BJ (cell line): ENCODE measurements at regions of chr20 and their contacts with region 1.

Region 1: DNA sequence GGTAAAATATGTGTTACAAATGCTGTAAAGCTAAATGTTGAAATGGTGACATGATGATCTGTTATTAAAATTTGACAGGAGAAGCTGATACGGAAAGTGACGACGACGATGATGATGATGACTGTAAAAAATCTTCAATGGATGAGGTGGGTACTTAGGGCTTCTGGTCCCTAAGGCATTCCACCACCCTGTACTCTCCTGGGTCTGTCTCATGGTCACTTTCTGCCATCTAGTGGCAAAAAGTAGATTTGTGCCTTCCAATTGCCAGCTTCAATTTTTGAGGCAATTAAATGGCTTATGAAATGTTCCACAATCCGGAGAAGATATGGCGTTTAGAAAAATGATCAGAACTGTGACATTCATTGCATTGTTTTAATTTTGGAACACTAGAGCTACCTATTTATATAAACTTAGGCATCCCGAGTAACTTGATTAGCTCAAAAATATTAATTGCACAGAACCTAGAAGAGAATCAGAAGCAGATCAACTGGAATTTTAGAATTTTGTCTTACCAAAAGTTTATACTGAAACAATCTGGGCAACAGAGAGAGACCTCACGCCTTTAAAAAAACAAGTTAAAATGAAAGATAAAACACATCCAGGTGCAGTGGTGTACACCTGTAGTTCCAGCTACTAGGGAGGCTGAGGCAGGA is 346.5 kb upstream of the PLCB4 start:
- DNase-seq: no peak
- H3K4me3 ChIP-seq: no peak overlapping the region
- H3K27me3 ChIP-seq: no peaks in the 10 kb centered on the region
- CTCF ChIP-seq: peak; percentile 76

Region 2: GRCh38 chr20:7935027-7935551 is 787.3 kb before region 1 on chr20:
- CTCF ChIA-PET with region 1: interaction called, 143 read pairs
- POLR2A ChIA-PET with region 1: no interaction called
- DNase-seq: no peak
- H3K4me3 ChIP-seq: no peak overlapping the region
- H3K27me3 ChIP-seq: no peaks in the 10 kb centered on the region; the same call in none of the 2 replicates
- CTCF ChIP-seq: no peak

Region 3: DNA sequence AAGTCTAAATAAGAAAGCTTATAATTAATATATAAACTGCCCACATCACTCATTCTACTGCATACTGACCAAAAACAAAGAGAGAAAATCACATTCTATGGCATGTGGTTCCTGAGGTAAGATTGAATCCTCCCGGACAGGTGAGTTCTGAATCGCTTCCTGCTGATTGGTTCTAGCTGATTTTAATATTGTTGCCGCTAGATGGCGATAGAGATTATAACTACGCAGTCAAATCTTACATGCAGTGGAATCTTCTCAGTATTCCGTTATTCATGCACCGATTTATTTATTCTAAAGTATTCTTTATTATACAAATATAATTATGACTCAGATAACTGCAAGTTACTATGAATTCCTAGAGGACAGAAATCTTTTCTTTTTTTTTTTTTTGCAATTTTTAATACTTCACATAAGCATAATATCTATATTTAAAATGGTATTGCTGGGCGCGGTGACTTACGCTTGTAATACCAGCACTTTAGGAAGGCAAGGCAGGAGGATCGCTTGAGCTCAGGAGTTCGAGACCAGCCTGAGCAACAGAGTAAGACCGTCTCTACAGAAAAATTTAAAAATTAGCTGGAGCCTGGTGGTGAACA is 678.6 kb before region 1 on chr20:
- CTCF ChIA-PET with region 1: interaction called, 183 read pairs
- POLR2A ChIA-PET with region 1: no interaction called
- DNase-seq: no peak
- H3K4me3 ChIP-seq: no peak overlapping the region
- H3K27me3 ChIP-seq: peaks cover 1% of the 10 kb centered on the region
- CTCF ChIP-seq: peak; percentile 61

Region 4: DNA sequence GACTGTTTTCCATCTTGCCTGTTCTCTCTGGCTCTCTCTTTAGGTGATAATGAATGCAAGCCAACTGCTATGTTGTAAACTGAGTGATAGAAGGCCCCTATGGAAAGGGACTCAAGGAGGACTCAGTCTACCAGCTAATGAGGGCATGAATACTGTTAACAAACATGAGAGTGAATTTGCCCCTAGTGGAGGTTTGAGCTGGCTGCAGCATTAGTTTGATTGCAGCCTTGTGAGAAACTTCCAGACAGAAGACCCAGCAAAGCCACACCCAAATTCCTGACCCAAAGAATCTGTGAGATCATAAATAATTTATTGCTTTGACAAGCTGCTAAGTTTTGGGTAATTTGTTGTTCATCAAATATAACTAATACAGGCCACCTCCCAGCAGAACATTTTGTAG is 640.4 kb before region 1 on chr20:
- CTCF ChIA-PET with region 1: interaction called, 10 read pairs
- POLR2A ChIA-PET with region 1: no interaction called
- DNase-seq: no peak
- H3K4me3 ChIP-seq: no peak overlapping the region
- H3K27me3 ChIP-seq: no peaks in the 10 kb centered on the region
- CTCF ChIP-seq: peak; percentile 44

Region 5: DNA sequence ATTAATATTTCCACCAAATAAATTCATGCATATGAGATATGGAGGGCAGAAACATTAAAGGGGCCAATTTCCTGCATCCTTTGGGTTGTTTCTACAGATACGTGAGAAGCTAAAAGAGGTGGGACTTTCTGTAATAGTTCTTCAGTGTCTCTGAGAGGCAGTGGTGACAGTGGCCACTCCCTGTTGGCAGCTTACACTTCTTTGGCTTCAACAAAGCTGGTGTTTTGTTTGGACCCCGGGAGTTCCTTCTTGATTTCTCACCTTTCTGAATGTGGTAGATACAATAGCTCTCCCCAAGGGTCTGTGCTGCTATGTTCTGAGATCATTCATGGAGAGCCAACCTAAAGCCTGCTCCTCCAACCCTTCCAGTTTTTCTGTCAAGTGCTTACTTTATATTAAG is 582.5 kb before region 1 on chr20:
- CTCF ChIA-PET with region 1: interaction called, 30 read pairs
- POLR2A ChIA-PET with region 1: no interaction called
- DNase-seq: no peak
- H3K4me3 ChIP-seq: no peak overlapping the region
- H3K27me3 ChIP-seq: no peaks in the 10 kb centered on the region
- CTCF ChIP-seq: no peak

Region 6: GRCh38 chr20:8608470-8608869 is 113.9 kb before region 1 on chr20:
- CTCF ChIA-PET with region 1: interaction called, 10 read pairs
- POLR2A ChIA-PET with region 1: no interaction called
- DNase-seq: peak; percentile 41
- H3K4me3 ChIP-seq: no peak overlapping the region
- H3K27me3 ChIP-seq: no peaks in the 10 kb centered on the region
- CTCF ChIP-seq: no peak